MCF 10A (cell line): ENCODE measurements at regions of chr18 and their contacts with region 1.

Region 1: DNA sequence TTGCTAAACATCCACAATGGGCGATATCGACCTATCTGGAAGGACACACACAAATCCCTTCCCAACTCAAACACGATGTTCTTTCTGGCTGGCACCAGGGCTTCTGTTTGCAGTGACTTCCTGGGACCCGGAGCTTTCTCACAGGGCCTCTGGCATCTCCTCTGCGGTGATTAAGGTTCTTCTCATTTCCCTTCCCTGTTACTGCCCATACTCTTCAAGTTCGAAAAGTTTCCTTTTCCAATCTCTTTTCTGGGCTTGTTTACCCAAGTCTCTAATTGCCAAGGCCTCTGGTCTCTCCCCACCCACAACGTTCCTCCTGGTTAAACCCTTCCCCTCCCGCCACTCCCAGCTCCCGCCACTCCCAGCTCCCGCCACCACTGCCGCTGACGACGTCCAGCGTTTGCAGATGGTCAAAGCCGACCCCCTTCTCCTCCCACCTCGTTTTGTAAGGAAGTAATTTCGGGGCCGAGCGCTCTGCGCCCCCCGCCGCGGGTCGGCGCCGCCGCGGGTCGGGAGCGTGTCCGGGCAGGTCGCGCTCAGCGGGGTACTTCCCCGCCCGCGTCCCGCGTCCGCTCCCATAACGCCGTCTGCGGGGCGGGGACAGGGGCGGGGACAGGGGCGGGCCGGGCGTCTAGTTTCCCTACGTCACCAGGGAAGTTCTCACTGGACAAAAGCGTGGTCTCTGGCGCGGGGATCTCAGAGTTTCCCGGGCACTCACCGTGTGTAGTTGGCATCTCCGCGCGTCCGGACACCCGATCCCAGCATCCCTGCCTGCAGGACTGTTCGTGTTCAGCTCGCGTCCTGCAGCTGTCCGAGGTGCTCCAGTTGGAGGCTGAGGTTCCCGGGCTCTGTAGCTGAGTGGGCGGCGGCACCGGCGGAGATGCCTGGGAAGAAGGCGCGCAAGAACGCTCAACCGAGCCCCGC is at the start of gene PMAIP1:
- DNase-seq: peak; percentile 96
- H3K4me3 Mint-ChIP-seq: peak within 1 kb of the TSS; percentile 96
- H3K27ac Mint-ChIP-seq: peak within 1 kb of the TSS; percentile 99
- H3K4me1 Mint-ChIP-seq: peaks cover 16% of the 10 kb centered on the region
- H3K27me3 Mint-ChIP-seq: no peaks in the 10 kb centered on the region
- CTCF ChIP-seq: no peak
- total RNA-seq, gene PMAIP1: 21.7 and 28.0 TPM in 2 replicates

Region 2: DNA sequence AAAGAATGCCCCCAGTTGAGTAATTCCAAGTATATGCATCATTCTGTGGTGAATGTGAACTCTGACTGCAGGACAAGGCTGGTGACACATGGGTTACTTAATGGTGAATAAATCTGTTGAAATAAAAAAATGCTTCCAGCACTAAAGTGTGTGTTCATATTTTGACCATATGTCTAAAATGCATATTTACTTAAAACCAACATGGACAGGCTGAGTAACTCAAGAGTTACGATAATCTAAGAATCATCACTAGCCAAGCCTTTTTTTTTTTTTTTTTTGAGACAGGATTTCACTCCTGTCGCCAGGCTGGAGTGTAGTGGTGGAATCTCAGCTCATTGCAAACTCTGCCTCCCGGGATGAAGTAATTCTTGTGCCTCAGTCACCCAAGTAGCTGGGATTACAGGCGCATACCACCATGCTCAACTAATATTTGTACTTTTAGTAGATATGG is 155.3 kb before region 1 on chr18:
- CTCF ChIA-PET with region 1: no interaction called
- POLR2A ChIA-PET with region 1: no interaction called
- intact Hi-C with region 1: no loop called
- DNase-seq: peak; percentile 86
- H3K4me3 Mint-ChIP-seq: no peak overlapping the region
- H3K27ac Mint-ChIP-seq: peak overlapping the region; percentile 74
- H3K4me1 Mint-ChIP-seq: peaks cover 24% of the 10 kb centered on the region
- H3K27me3 Mint-ChIP-seq: no peaks in the 10 kb centered on the region
- CTCF ChIP-seq: no peak

Region 3: GRCh38 chr18:59846814-59847490 is 52.6 kb before region 1 on chr18:
- CTCF ChIA-PET with region 1: no interaction called
- POLR2A ChIA-PET with region 1: interaction called, 31 read pairs
- intact Hi-C with region 1: no loop called
- DNase-seq: peak; percentile 53
- H3K4me3 Mint-ChIP-seq: peak overlapping the region; percentile 6
- H3K27ac Mint-ChIP-seq: peak overlapping the region; percentile 69
- H3K4me1 Mint-ChIP-seq: peaks cover 25% of the 10 kb centered on the region
- H3K27me3 Mint-ChIP-seq: no peaks in the 10 kb centered on the region
- CTCF ChIP-seq: no peak

Region 4: GRCh38 chr18:59885579-59886163 is 13.9 kb before region 1 on chr18:
- CTCF ChIA-PET with region 1: interaction called, 5 read pairs
- POLR2A ChIA-PET with region 1: interaction called, 23 read pairs
- intact Hi-C with region 1: no loop called
- DNase-seq: peak; percentile 49
- H3K4me3 Mint-ChIP-seq: no peak overlapping the region
- H3K27ac Mint-ChIP-seq: peak overlapping the region; percentile 44
- H3K4me1 Mint-ChIP-seq: peaks cover 24% of the 10 kb centered on the region
- H3K27me3 Mint-ChIP-seq: no peaks in the 10 kb centered on the region
- CTCF ChIP-seq: no peak

Region 5: GRCh38 chr18:59927246-59927825 is 27.8 kb after region 1 on chr18:
- CTCF ChIA-PET with region 1: no interaction called
- POLR2A ChIA-PET with region 1: interaction called, 32 read pairs
- intact Hi-C with region 1: no loop called
- DNase-seq: peak; percentile 76
- H3K4me3 Mint-ChIP-seq: no peak overlapping the region
- H3K27ac Mint-ChIP-seq: no peak overlapping the region
- H3K4me1 Mint-ChIP-seq: peaks cover 19% of the 10 kb centered on the region
- H3K27me3 Mint-ChIP-seq: no peaks in the 10 kb centered on the region
- CTCF ChIP-seq: no peak

Region 6: DNA sequence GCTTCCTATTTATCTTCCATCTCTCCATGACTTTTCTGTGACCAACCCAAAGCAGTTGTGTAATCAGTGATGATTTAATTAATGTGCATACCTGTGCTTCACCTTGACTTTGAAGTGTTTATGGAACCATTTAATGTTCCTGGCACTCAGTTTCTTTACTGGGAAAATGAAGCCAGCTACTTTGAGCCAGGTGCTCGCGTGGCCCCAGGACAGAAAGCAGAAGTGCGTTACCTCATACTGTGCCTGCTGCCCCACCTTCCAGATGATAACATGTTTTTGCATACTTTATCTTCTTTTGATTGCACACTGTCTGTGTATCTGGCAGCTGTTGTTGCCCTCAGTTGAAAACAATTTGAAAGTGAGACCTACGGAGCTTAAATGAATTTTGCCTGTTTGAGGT is 61.5 kb after region 1 on chr18:
- CTCF ChIA-PET with region 1: interaction called, 3 read pairs
- POLR2A ChIA-PET with region 1: interaction called, 18 read pairs
- intact Hi-C with region 1: no loop called
- DNase-seq: no peak
- H3K4me3 Mint-ChIP-seq: no peak overlapping the region
- H3K27ac Mint-ChIP-seq: no peak overlapping the region
- H3K4me1 Mint-ChIP-seq: peaks cover 6% of the 10 kb centered on the region
- H3K27me3 Mint-ChIP-seq: peaks cover 8% of the 10 kb centered on the region
- CTCF ChIP-seq: no peak

Region 7: GRCh38 chr18:60064271-60064670 is 164.7 kb after region 1 on chr18:
- CTCF ChIA-PET with region 1: no interaction called
- POLR2A ChIA-PET with region 1: no interaction called
- intact Hi-C with region 1: no loop called
- DNase-seq: no peak
- H3K4me3 Mint-ChIP-seq: no peak overlapping the region
- H3K27ac Mint-ChIP-seq: no peak overlapping the region
- H3K4me1 Mint-ChIP-seq: peaks cover 6% of the 10 kb centered on the region
- H3K27me3 Mint-ChIP-seq: peaks cover 76% of the 10 kb centered on the region
- CTCF ChIP-seq: no peak